Mammary epithelial cell (primary cell): ENCODE measurements at regions of chr17 and their contacts with region 1.

Region 1: GRCh38 chr17:5584383-5585286 is at the start of gene NLRP1:
- DNase-seq: peak; percentile 99
- H3K4me3 ChIP-seq: peak within 1 kb of the TSS; percentile 15 to 32 (median 31)
- H3K27ac ChIP-seq: peak within 1 kb of the TSS; percentile 84
- H3K4me1 ChIP-seq: peaks cover 41% of the 10 kb centered on the region
- H3K27me3 ChIP-seq: no peaks in the 10 kb centered on the region
- CTCF ChIP-seq: no peak
- total RNA-seq, gene NLRP1: 27.3 to 48.3 TPM

Region 2: GRCh38 chr17:5468075-5468473 is 116.6 kb before region 1 on chr17:
- CTCF ChIA-PET with region 1: no interaction called
- dilution Hi-C with region 1: no loop called
- in situ Hi-C with region 1: no loop called
- intact Hi-C with region 1: loop called (anchors 1 kb)
- DNase-seq: peak; percentile 16
- H3K4me3 ChIP-seq: peak overlapping the region; percentile 87 to 92 (median 87)
- H3K27ac ChIP-seq: peak overlapping the region; percentile 54
- H3K4me1 ChIP-seq: peaks cover 10% of the 10 kb centered on the region
- H3K27me3 ChIP-seq: no peaks in the 10 kb centered on the region
- CTCF ChIP-seq: no peak

Region 3: GRCh38 chr17:5516060-5516792 is 68.4 kb before region 1 on chr17:
- CTCF ChIA-PET with region 1: no interaction called
- dilution Hi-C with region 1: no loop called
- in situ Hi-C with region 1: no loop called
- intact Hi-C with region 1: loop called (anchors 1 kb)
- DNase-seq: peak; percentile 90
- H3K4me3 ChIP-seq: no peak overlapping the region
- H3K27ac ChIP-seq: peak overlapping the region; percentile 33
- H3K4me1 ChIP-seq: peaks cover 17% of the 10 kb centered on the region
- H3K27me3 ChIP-seq: no peaks in the 10 kb centered on the region
- CTCF ChIP-seq: no peak

Region 4: GRCh38 chr17:5832886-5833285 is 248.3 kb after region 1 on chr17:
- CTCF ChIA-PET with region 1: no interaction called
- dilution Hi-C with region 1: no loop called
- in situ Hi-C with region 1: no loop called
- intact Hi-C with region 1: loop called (anchors 1 kb)
- DNase-seq: peak; percentile 84
- H3K4me3 ChIP-seq: no peak overlapping the region
- H3K27ac ChIP-seq: peak overlapping the region; percentile 100
- H3K4me1 ChIP-seq: peaks cover 61% of the 10 kb centered on the region
- H3K27me3 ChIP-seq: no peaks in the 10 kb centered on the region
- CTCF ChIP-seq: no peak

Region 5: GRCh38 chr17:6435968-6436367 is 851.3 kb after region 1 on chr17:
- CTCF ChIA-PET with region 1: interaction called, 3 read pairs
- dilution Hi-C with region 1: no loop called
- in situ Hi-C with region 1: no loop called
- intact Hi-C with region 1: loop called (anchors 1 kb)
- DNase-seq: peak; percentile 43
- H3K4me3 ChIP-seq: no peak overlapping the region
- H3K27ac ChIP-seq: no peak overlapping the region
- H3K4me1 ChIP-seq: no peaks in the 10 kb centered on the region
- H3K27me3 ChIP-seq: no peaks in the 10 kb centered on the region
- CTCF ChIP-seq: peak; percentile 75 to 83